Mammary epithelial cell (primary cell): ENCODE measurements at regions of chr15 and their contacts with region 1.

Region 1: GRCh38 chr15:94412979-94413746 is 181.8 kb downstream of the MCTP2 start:
- DNase-seq: no peak
- H3K4me3 ChIP-seq: no peak overlapping the region
- H3K27ac ChIP-seq: no peak overlapping the region
- H3K4me1 ChIP-seq: no peaks in the 10 kb centered on the region
- H3K27me3 ChIP-seq: no peaks in the 10 kb centered on the region
- CTCF ChIP-seq: peak; percentile 37 to 46

Region 2: GRCh38 chr15:94375997-94376396 is 37.2 kb before region 1 on chr15:
- CTCF ChIA-PET with region 1: no interaction called
- dilution Hi-C with region 1: no loop called
- in situ Hi-C with region 1: no loop called
- intact Hi-C with region 1: no loop called
- DNase-seq: no peak
- H3K4me3 ChIP-seq: no peak overlapping the region
- H3K27ac ChIP-seq: no peak overlapping the region
- H3K4me1 ChIP-seq: no peaks in the 10 kb centered on the region
- H3K27me3 ChIP-seq: no peaks in the 10 kb centered on the region
- CTCF ChIP-seq: no peak

Region 3: DNA sequence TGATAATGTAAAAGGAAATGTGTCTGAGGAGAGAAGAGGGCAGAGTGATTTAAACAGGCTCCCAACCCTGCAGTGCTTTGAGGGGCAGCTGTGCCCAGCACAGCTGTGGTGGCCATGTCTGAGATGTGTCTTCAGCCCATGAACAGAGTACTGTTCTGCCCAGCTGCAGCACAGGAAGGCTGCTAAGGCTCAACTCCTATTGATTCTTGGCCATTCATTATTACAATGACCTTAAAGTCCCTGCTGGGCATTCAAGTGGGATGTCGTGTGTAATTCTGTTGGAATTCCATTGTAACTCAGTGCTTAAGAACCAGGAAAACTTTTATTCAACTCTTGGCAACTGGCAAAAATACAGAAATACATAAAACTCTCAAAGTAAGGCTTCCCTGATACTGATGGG is 47.5 kb after region 1 on chr15:
- CTCF ChIA-PET with region 1: no interaction called
- dilution Hi-C with region 1: loop called (anchors 5 kb)
- in situ Hi-C with region 1: no loop called
- intact Hi-C with region 1: no loop called
- DNase-seq: no peak
- H3K4me3 ChIP-seq: no peak overlapping the region
- H3K27ac ChIP-seq: no peak overlapping the region
- H3K4me1 ChIP-seq: no peaks in the 10 kb centered on the region
- H3K27me3 ChIP-seq: no peaks in the 10 kb centered on the region
- CTCF ChIP-seq: no peak

Region 4: GRCh38 chr15:94655249-94655880 is 242.2 kb after region 1 on chr15:
- CTCF ChIA-PET with region 1: no interaction called
- dilution Hi-C with region 1: no loop called
- in situ Hi-C with region 1: no loop called
- intact Hi-C with region 1: loop called (anchors 5 kb)
- DNase-seq: peak; percentile 6
- H3K4me3 ChIP-seq: no peak overlapping the region
- H3K27ac ChIP-seq: no peak overlapping the region
- H3K4me1 ChIP-seq: no peaks in the 10 kb centered on the region
- H3K27me3 ChIP-seq: peaks cover 2% of the 10 kb centered on the region
- CTCF ChIP-seq: no peak